Dorsolateral prefrontal cortex (tissue), 120 donors: ENCODE measurements at regions of chr12 and their contacts with region 1.

Region 1: GRCh38 chr12:48851883-48852733 is at the start of gene DDX23:
- DNase-seq: peak; percentile 87 to 96 (median 95)
- H3K4me3 ChIP-seq: peak within 1 kb of the TSS; percentile 67 to 100 (median 94)
- H3K27ac ChIP-seq: peak within 1 kb of the TSS in 58 of 59 donors; percentile 49 to 94 (median 84)
- H3K27me3 ChIP-seq: no peaks in the 10 kb centered on the region
- CTCF ChIP-seq: peak in 39 of 56 donors; percentile 4 to 68 (median 39)
- total RNA-seq, gene DDX23: 43.5 to 81.2 (median 57.8) TPM

Region 2: DNA sequence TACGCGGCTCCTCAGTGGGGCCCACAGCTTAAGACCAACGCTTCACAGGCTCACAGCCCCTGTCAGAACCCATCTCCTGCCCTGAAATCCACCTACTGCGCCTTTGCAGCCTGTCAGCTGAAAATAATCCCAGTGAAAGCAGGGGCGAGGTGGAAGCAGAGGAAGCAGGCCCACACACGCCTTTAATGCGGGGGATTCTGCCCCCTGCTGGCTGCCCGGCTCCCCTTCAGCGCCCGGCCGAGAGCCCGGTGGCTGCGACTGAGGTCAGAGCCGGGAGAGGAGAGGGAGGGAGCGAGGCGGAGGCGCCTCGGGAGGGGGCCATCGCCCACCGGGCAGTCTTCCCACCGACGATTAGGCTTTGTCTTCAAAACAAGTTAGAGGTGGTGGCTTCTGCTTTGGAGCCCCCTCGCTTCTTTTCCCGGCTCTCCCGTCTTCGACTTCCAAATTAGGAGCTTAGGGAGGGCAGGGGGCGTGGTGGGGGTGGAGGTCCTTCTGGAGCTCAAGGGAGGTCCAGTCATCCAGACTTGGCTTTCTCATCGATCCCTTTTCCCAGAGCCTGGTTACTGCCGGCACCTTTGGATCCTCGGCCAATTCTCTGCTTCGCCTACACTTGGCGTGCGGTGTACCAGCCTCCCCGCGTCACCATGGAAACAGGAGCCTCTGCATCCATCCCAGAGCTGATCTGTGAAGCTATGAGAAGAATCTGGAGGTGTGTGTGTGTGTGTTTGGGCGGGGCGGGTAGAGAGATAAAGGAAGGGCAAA is 38.7 kb after region 1 on chr12:
- intact Hi-C with region 1: loop called (anchors 1 to 2 kb)
- DNase-seq: peak; percentile 78 to 91 (median 88)
- H3K4me3 ChIP-seq: peak overlapping the region; percentile 34 to 74 (median 55)
- H3K27ac ChIP-seq: peak overlapping the region in 54 of 59 donors; percentile 32 to 93 (median 74)
- H3K27me3 ChIP-seq: no peaks in the 10 kb centered on the region
- CTCF ChIP-seq: peak; percentile 76 to 98 (median 94)

Region 3: DNA sequence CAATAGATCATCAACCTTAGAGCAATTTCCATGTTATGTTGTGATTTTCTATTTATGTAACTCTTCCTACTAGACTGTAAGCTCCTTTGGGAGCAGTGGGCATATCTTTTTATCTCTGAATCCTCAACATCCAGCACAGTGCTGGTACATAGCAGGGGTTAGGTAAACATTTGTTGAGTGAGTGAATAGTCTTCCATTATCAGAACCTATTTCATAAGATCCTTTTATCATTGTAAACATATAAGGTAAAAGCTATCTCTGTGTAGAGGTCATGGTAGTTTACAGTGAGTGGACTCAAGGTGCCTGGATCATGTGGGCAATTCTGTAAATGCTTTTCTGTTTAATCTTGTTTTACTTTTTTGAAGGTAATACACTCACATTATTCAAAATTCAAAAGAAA is 58.1 kb after region 1 on chr12:
- intact Hi-C with region 1: no loop called
- DNase-seq: no peak
- H3K4me3 ChIP-seq: no peak overlapping the region
- H3K27ac ChIP-seq: no peak overlapping the region
- H3K27me3 ChIP-seq: no peaks in the 10 kb centered on the region
- CTCF ChIP-seq: no peak

Region 4: GRCh38 chr12:48936379-48936979 is 84.4 kb after region 1 on chr12:
- intact Hi-C with region 1: loop called (anchors 2 kb)
- DNase-seq: peak in 9 of 10 donors; percentile 66 to 85 (median 72)
- H3K4me3 ChIP-seq: no peak overlapping the region
- H3K27ac ChIP-seq: peak overlapping the region in 1 of 59 donors; percentile 30
- H3K27me3 ChIP-seq: no peaks in the 10 kb centered on the region
- CTCF ChIP-seq: peak; percentile 72 to 98 (median 89)

Region 5: DNA sequence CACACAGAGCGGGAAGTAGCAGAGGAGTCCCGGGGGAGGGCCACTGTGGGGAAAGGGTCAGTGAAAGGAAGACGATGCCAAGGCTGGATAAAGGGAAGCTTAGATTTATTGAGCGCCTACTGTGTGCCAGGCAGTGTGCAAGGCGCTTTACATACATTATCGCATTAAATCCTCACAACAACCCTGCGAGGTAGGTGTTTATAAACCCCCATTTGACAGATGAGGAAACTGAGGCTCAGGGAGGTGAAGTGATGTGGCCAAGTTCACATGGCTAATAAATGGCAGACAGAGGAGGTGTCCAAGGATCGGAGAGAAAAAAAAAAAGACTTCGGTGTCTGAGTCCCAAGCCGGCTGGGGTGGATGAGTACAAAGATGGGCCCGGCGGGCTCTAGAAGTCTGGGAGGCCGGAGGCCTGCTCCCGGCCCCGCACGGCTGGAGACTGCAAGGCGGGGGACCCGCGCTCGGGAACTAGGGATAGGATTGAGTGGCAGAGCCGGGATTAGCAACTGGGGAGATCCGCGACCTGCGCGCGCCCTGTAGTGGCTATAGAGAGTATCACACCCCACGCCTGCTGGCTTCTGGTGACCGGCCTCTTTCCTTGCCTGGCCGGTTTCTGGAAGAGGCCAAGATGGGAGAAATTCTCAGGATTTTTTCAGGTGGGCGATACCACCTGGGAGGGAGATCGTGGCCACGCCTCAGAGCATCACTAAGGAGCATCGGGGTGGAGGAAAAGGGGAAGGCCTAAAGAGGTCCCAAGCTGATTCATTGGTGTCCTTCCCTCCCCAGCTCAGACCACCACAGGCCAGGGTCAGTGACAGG is 143.2 kb after region 1 on chr12:
- intact Hi-C with region 1: loop called (anchors 10 kb)
- DNase-seq: peak; percentile 67 to 88 (median 84)
- H3K4me3 ChIP-seq: peak overlapping the region in 52 of 59 donors; percentile 14 to 60 (median 36)
- H3K27ac ChIP-seq: peak overlapping the region in 8 of 59 donors; percentile 3 to 96 (median 14)
- H3K27me3 ChIP-seq: peaks cover 0 to 71% (median 9%) of the 10 kb centered on the region in 45 donors
- CTCF ChIP-seq: peak; percentile 53 to 91 (median 82)